Posterior cingulate gyrus (tissue), 11 donors: ENCODE measurements at regions of chr3 and their contacts with region 1.

Region 1: GRCh38 chr3:113626503-113627371 is 69.7 kb downstream of the USF3 start:
- DNase-seq: peak in 8 of 10 donors; percentile 36 to 93 (median 62)

Region 2: GRCh38 chr3:113051302-113051711 is 575.4 kb before region 1 on chr3:
- intact Hi-C with region 1: loop called (anchors 1 kb)
- DNase-seq: peak; percentile 63 to 97 (median 89)

Region 3: GRCh38 chr3:113495035-113495434 is 131.7 kb before region 1 on chr3:
- intact Hi-C with region 1: loop called (anchors 2 kb)
- DNase-seq: no peak

Region 4: GRCh38 chr3:113516115-113516505 is 110.6 kb before region 1 on chr3:
- intact Hi-C with region 1: no loop called
- DNase-seq: no peak